Heart right ventricle (tissue), 16 donors: ENCODE measurements at regions of chr6 and their contacts with region 1.

Region 1: GRCh38 chr6:36094753-36095496 is 35.4 kb upstream of the MAPK13 start:
- DNase-seq: peak; percentile 78 to 81
- ATAC-seq: peak; percentile 89 to 96 (median 95)
- H3K4me3 ChIP-seq: peak overlapping the region in 1 of 10 donors; percentile 8
- H3K27ac ChIP-seq: peak overlapping the region in 3 of 10 donors; percentile 9 to 50 (median 39)
- H3K4me1 ChIP-seq: peaks cover 0 to 33% (median 16%) of the 10 kb centered on the region in 9 donors
- H3K27me3 ChIP-seq: no peaks in the 10 kb centered on the region
- CTCF ChIP-seq: peak; percentile 80 to 99 (median 96)

Region 2: DNA sequence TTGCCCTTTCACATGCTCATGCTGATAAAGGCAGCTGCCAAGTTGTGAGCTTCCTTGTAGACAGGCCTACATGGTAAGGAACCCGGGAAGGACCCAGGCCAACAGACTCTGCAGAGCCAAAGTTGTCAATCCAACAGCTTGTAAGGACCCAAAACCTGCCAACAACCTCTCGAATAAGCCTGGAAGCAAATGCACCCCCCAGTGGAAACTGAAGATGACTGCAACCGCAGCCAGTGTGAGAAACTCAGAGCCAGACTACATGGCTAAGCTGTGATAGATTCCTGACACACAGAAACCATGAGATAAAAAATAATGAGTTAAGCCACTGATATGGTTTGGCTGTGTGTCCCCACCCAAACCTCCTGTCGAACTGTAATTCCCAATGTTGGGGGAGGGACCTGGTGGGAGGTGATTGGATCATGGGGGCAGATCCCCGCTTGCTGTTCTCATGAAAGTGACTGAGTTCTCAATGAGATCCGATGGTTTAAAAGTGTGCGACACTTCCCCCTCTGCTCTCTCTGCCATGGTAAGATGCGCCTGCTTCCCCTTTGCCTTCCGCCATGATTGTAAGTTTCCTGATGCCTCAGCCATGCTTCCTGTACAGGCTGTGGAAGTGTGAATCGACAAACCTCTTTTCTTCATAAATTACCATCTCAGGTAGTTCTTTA is 337.3 kb before region 1 on chr6:
- intact Hi-C with region 1: loop called in 2 of 10 experiments (anchors 5 to 10 kb)
- DNase-seq: no peak
- ATAC-seq: no peak
- H3K4me3 ChIP-seq: no peak overlapping the region
- H3K27ac ChIP-seq: no peak overlapping the region
- H3K4me1 ChIP-seq: no peaks in the 10 kb centered on the region
- H3K27me3 ChIP-seq: peaks cover 0 to 43% (median 28%) of the 10 kb centered on the region in 7 donors
- CTCF ChIP-seq: peak in 6 of 9 donors; percentile 23 to 41 (median 32)

Region 3: DNA sequence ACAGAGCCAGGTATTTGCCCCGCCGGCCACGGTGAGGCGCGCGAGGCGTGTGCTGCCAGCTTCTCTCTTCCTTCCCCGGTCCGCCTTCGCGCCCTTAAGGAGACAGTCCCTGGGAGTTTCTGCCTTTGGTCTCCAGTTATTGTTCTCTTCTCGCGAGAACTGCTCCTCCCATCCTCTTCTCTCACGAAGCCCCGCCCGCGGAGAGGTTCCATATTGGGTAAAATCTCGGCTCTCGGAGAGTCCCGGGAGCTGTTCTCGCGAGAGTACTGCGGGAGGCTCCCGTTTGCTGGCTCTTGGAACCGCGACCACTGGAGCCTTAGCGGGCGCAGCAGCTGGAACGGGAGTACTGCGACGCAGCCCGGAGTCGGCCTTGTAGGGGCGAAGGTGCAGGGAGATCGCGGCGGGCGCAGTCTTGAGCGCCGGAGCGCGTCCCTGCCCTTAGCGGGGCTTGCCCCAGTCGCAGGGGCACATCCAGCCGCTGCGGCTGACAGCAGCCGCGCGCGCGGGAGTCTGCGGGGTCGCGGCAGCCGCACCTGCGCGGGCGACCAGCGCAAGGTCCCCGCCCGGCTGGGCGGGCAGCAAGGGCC is 67.3 kb before region 1 on chr6 and contains the start of gene MAPK14:
- intact Hi-C with region 1: loop called (anchors 1 to 2 kb)
- DNase-seq: peak; percentile 99 to 100
- ATAC-seq: peak; percentile 96 to 98 (median 96)
- H3K4me3 ChIP-seq: peak within 1 kb of the TSS; percentile 82 to 100 (median 96)
- H3K27ac ChIP-seq: peak within 1 kb of the TSS; percentile 84 to 96 (median 94)
- H3K4me1 ChIP-seq: peaks cover 5 to 49% (median 29%) of the 10 kb centered on the region in 9 donors
- H3K27me3 ChIP-seq: peaks cover 0 to 21% (median 18%) of the 10 kb centered on the region in 7 donors
- CTCF ChIP-seq: peak; percentile 86 to 98 (median 91)
- total RNA-seq, gene MAPK14: 25.0 to 38.1 (median 29.4) TPM